ENCODE measurements at regions of chr13 and their contacts with region 1.

Region 1: DNA sequence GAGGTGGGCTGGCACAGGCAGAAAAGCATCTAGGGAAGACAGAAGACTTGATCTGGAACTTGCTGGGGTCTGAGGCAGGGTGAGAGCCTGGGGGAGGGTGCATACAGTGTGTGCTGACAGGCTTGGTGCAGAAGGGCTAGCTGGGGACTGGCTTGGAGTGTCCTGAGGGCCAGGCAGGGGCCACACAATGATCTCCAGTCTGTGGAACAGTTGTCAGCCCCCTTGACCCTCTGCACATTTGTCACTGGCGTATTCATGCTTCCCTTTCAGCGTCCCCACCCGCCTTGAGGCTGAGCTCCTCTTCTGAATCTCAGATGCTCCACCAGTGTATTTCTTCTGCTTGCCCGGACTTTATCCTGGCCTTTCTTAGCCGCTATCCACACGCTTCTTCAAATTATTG is 2.8 kb upstream of the MICU2 start:
- DNase-seq: no peak
- H3K4me3 ChIP-seq: no peak overlapping the region
- H3K27ac ChIP-seq: no peak overlapping the region
- H3K4me1 ChIP-seq: no peaks in the 10 kb centered on the region
- H3K27me3 ChIP-seq: peaks cover 0 to 6% of the 10 kb centered on the region in 2 donors
- CTCF ChIP-seq: no peak
- POLR2A ChIP-seq: no peak

Region 2: GRCh38 chr13:21590231-21590630 is 16.6 kb before region 1 on chr13:
- intact Hi-C with region 1: loop called (anchors 1 kb)
- DNase-seq: no peak
- H3K4me3 ChIP-seq: no peak overlapping the region
- H3K27ac ChIP-seq: no peak overlapping the region
- H3K4me1 ChIP-seq: no peaks in the 10 kb centered on the region
- H3K27me3 ChIP-seq: no peaks in the 10 kb centered on the region
- CTCF ChIP-seq: no peak
- POLR2A ChIP-seq: no peak

Measured in breast epithelium (tissue), 4 donors.